Dendritic cell treated with granulocyte-macrophage colony-stimulating factor and Interleukin-4, amounts not matched to agents 40 ng/mL and 50 ng/mL, for 4 days (primary cell): ENCODE measurements at regions of chr15 and their contacts with region 1.

Region 1: GRCh38 chr15:29805043-29805707 is 17.1 kb downstream of the TJP1 start:
- H3K4me3 Mint-ChIP-seq: no peak overlapping the region
- H3K27ac Mint-ChIP-seq: no peak overlapping the region
- H3K4me1 Mint-ChIP-seq: no peaks in the 10 kb centered on the region
- H3K27me3 Mint-ChIP-seq: peaks cover 28% of the 10 kb centered on the region

Region 2: DNA sequence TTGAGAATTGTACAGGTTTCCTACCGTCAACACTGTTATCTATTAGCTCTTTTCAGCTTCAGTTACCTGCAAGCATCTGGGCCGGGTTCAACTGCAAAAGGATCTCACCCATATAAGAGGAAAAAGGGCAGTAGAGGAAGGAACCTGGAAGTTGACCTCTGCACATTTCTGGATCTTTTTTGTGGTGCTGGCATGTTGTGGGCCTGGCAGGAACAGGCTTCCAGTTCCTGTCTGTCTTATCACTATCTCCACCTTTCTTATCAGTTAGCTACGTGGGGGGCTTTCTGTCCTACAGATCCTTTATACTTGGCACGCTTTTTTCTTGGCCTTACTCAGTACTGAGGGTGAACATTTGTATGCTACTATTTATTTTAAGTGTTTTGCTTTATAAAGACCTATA is 59.3 kb after region 1 on chr15:
- intact Hi-C with region 1: loop called (anchors 2 kb)
- H3K4me3 Mint-ChIP-seq: no peak overlapping the region
- H3K27ac Mint-ChIP-seq: no peak overlapping the region
- H3K4me1 Mint-ChIP-seq: no peaks in the 10 kb centered on the region
- H3K27me3 Mint-ChIP-seq: peaks cover 1% of the 10 kb centered on the region